Psoas muscle (tissue), 8 donors: ENCODE measurements at regions of chr6 and their contacts with region 1.

Region 1: GRCh38 chr6:17218023-17218748 is 63.0 kb upstream of the RBM24 start:
- DNase-seq: no peak
- ATAC-seq: no peak
- H3K4me3 ChIP-seq: no peak overlapping the region
- H3K27ac ChIP-seq: no peak overlapping the region
- H3K4me1 ChIP-seq: no peaks in the 10 kb centered on the region
- H3K27me3 ChIP-seq: no peaks in the 10 kb centered on the region
- CTCF ChIP-seq: no peak

Region 2: GRCh38 chr6:17258749-17259148 is 40.6 kb after region 1 on chr6:
- intact Hi-C with region 1: loop called in 1 of 2 experiments (anchors 5 kb)
- DNase-seq: no peak
- ATAC-seq: peak in 2 of 4 donors; percentile 30 to 59
- H3K4me3 ChIP-seq: no peak overlapping the region
- H3K27ac ChIP-seq: no peak overlapping the region
- H3K4me1 ChIP-seq: peaks cover 15% of the 10 kb centered on the region
- H3K27me3 ChIP-seq: no peaks in the 10 kb centered on the region
- CTCF ChIP-seq: no peak

Region 3: DNA sequence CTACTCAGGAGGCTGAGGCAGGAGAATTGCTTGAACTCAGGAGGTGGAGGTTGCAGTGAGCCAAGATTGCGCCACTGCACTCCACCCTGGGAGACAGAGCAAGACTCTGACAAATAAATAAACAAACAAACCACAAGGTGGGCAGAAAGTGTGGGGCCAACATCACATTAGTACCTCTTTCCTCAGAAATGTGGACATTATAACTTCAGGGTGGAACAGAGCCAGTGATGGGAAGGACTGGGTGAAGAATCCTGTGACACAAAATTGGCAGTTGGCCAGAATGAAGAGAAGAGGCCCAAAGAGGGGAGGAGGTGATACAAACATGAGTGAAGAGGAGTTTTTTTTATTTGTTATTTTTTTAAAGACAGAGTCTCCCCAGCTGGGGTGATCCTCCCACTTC is 437.9 kb after region 1 on chr6:
- intact Hi-C with region 1: no loop called
- DNase-seq: no peak
- ATAC-seq: peak in 1 of 4 donors; percentile 45
- H3K4me3 ChIP-seq: no peak overlapping the region
- H3K27ac ChIP-seq: no peak overlapping the region
- H3K4me1 ChIP-seq: no peaks in the 10 kb centered on the region
- H3K27me3 ChIP-seq: no peaks in the 10 kb centered on the region
- CTCF ChIP-seq: no peak